Mammary epithelial cell (primary cell): ENCODE measurements at regions of chr5 and their contacts with region 1.

Region 1: GRCh38 chr5:81936066-81936465 is 35.8 kb upstream of the ATG10 start:
- DNase-seq: no peak
- H3K4me3 ChIP-seq: no peak overlapping the region
- H3K27ac ChIP-seq: no peak overlapping the region
- H3K4me1 ChIP-seq: no peaks in the 10 kb centered on the region
- H3K27me3 ChIP-seq: no peaks in the 10 kb centered on the region
- CTCF ChIP-seq: no peak

Region 2: GRCh38 chr5:81898403-81898802 is 37.7 kb before region 1 on chr5:
- CTCF ChIA-PET with region 1: no interaction called
- dilution Hi-C with region 1: no loop called
- in situ Hi-C with region 1: no loop called
- intact Hi-C with region 1: no loop called
- DNase-seq: no peak
- H3K4me3 ChIP-seq: no peak overlapping the region
- H3K27ac ChIP-seq: no peak overlapping the region
- H3K4me1 ChIP-seq: no peaks in the 10 kb centered on the region
- H3K27me3 ChIP-seq: no peaks in the 10 kb centered on the region
- CTCF ChIP-seq: no peak

Region 3: DNA sequence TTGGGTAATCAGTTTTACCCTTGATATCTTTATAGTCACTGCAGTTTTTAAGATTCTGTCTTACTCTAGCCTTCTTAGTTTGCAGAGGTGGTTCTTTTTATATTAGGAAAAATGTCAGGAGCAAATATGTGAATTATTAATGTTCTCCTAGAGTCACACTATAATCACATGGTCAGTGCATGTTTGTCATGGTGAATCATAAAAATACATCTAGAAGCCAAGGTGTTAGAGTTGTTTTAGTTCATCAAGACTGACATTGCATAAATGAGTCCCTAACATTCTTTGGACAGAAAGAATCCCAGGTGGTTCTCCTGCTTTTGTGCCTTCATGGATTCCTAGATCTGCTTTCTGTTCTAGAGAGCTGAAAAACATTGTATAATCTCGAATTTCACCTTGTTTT is 58.6 kb after region 1 on chr5:
- CTCF ChIA-PET with region 1: no interaction called
- dilution Hi-C with region 1: loop called (anchors 5 kb)
- in situ Hi-C with region 1: no loop called
- intact Hi-C with region 1: no loop called
- DNase-seq: peak; percentile 18
- H3K4me3 ChIP-seq: no peak overlapping the region
- H3K27ac ChIP-seq: no peak overlapping the region
- H3K4me1 ChIP-seq: no peaks in the 10 kb centered on the region
- H3K27me3 ChIP-seq: no peaks in the 10 kb centered on the region
- CTCF ChIP-seq: no peak

Region 4: GRCh38 chr5:82534986-82535385 is 598.9 kb after region 1 on chr5:
- CTCF ChIA-PET with region 1: no interaction called
- dilution Hi-C with region 1: no loop called
- in situ Hi-C with region 1: no loop called
- intact Hi-C with region 1: no loop called
- DNase-seq: no peak
- H3K4me3 ChIP-seq: no peak overlapping the region
- H3K27ac ChIP-seq: no peak overlapping the region
- H3K4me1 ChIP-seq: no peaks in the 10 kb centered on the region
- H3K27me3 ChIP-seq: no peaks in the 10 kb centered on the region
- CTCF ChIP-seq: no peak

Region 5: DNA sequence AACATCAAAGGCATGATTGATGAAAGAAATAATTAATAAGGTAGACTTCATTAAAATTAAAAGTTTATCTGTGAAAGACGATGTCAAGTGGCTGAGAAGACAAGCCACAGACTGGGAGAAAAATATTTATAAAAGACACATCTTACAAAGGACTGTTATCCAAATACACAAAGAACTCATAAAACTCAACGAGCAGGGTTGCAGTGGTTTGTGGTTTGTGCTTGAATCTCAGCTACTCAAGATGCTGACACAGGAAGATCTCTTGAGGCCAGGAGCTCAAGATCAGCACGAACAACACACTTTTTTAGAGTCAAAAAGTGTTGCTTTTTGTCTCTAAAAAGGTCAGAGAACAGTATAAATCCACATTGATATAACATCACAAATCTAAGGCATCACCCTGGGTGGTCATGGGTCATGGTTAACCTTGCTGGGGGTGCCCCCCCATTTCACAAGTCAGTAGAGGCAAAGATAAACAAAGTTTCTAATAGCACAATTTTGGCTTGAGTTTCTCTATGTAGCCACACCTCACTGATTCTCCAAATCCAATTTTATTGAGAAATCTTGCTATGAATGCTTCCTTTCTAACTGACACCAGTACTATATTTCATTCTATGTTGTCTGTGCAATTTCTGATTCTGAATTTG is 685.0 kb after region 1 on chr5:
- CTCF ChIA-PET with region 1: no interaction called
- dilution Hi-C with region 1: no loop called
- in situ Hi-C with region 1: no loop called
- intact Hi-C with region 1: no loop called
- DNase-seq: peak; percentile 44
- H3K4me3 ChIP-seq: no peak overlapping the region
- H3K27ac ChIP-seq: no peak overlapping the region
- H3K4me1 ChIP-seq: no peaks in the 10 kb centered on the region
- H3K27me3 ChIP-seq: no peaks in the 10 kb centered on the region
- CTCF ChIP-seq: no peak